PC-9 (cell line): ENCODE measurements at regions of chr12 and their contacts with region 1.

Region 1: DNA sequence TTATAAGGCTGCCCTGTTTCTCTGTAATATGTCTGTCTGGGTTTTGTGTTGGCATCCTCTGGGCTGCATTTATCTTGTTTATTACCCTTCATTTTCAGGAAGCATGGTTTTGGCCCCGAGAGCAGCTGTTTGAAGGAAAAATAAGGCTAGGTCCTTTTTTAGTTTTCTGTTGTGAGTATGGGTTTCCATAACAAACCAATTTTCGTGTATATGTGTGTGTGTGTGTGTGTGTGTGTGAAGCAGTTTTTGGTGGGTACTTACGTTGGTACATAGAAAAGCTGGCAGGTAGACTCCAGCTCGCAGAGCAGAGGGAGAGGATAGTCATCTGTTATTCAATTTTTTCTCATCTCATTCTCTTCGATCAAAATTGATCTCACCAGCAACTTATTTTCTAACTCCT is 52.5 kb downstream of the MAPKAPK5 start:
- DNase-seq: no peak
- H3K4me3 ChIP-seq: no peak overlapping the region
- H3K27ac ChIP-seq: no peak overlapping the region
- H3K4me1 ChIP-seq: no peaks in the 10 kb centered on the region
- H3K27me3 ChIP-seq: no peaks in the 10 kb centered on the region
- CTCF ChIP-seq: no peak

Region 2: GRCh38 chr12:111369496-111370220 is 524.9 kb before region 1 on chr12:
- CTCF ChIA-PET with region 1: no interaction called
- POLR2A ChIA-PET with region 1: interaction called, 17 read pairs
- intact Hi-C with region 1: no loop called
- DNase-seq: no peak
- H3K4me3 ChIP-seq: peak overlapping the region; percentile 77; the same call in 1 of the 2 replicates
- H3K27ac ChIP-seq: no peak overlapping the region
- H3K4me1 ChIP-seq: peaks cover 27% of the 10 kb centered on the region
- H3K27me3 ChIP-seq: no peaks in the 10 kb centered on the region
- CTCF ChIP-seq: no peak

Region 3: DNA sequence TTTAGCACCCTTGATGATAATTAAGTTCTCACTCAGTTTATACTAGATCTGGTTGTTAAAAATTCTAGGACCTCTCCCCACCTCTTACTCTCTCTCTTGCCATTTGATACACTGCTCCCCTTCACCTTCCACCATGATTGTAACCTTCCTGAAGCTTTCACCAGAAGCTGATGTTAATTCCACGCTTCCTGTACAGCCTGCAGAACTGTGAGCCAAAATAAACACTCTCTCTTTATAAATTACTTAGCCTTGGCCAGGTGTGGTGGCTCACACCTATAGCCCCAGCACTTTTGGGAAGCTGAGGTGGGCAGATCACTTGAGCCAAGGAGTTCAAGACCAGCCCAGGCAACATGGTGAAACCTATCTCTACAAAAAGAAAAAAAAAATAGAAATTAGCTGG is 498.8 kb after region 1 on chr12:
- CTCF ChIA-PET with region 1: no interaction called
- POLR2A ChIA-PET with region 1: interaction called, 15 read pairs
- intact Hi-C with region 1: no loop called
- DNase-seq: no peak
- H3K4me3 ChIP-seq: no peak overlapping the region
- H3K27ac ChIP-seq: no peak overlapping the region
- H3K4me1 ChIP-seq: no peaks in the 10 kb centered on the region
- H3K27me3 ChIP-seq: no peaks in the 10 kb centered on the region
- CTCF ChIP-seq: no peak